HepG2 (cell line): ENCODE measurements at regions of chr14 and their contacts with region 1.

Region 1: GRCh38 chr14:61188978-61189808 is 91.9 kb downstream of the TMEM30B start:
- DNase-seq: peak; percentile 48
- ATAC-seq: peak; percentile 98
- H3K4me3 ChIP-seq: peak overlapping the region; percentile 49 to 72 (median 52); a peak in 5 of 6 replicates
- H3K27ac ChIP-seq: no peak overlapping the region
- H3K4me1 ChIP-seq: peaks cover 32% of the 10 kb centered on the region
- H3K27me3 ChIP-seq: peaks cover 0 to 4% of the 10 kb centered on the region in 2 experiments; a peak in 2 of 5 replicates
- CTCF ChIP-seq: peak; percentile 83
- EP300 ChIP-seq: no peak
- POLR2A ChIP-seq: no peak
- RAD21 ChIP-seq: peak; percentile 78

Region 2: DNA sequence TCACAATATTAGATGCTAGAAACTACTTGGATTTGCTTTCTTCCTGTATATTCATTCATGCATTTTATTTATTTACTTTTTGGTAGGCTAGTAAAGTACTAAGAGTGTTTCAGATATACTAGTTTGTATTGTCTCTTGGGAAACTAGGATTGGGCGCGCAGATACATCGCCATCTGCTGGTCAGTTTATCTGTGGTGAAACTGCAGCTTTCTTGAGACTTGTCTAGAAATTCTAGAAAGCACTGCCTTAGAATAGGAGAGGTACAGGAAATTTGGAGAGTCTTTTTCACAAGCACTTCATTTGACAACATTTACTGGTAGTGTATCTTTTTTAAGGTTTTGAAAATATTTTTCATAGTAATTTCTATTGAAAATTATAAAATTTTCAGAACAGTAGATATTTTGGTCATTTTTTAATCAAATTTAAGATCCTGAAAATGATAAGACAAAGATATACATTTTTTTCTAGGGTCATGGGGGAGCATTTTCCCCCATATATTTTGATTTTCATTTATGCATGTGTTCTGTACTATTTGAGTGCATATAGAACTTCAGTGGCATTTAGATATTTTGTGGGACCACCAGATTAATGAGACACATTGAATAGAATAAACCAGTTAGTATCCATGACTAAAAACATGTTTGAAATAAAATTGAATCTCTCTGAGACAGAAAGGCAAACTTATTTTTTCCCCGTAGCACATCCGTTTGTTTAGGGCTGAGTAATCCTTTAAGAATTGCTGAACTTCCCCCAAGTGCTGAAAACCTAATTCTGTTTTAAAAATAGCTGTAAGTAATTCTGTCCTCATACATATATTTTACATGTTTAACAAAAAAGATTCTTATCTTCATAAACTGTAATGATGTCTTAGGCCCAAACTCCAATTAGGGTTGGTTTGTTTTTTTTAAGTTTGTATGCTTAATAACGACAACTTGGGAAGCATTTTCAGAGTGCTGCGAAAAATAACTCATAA is 163.7 kb before region 1 on chr14:
- CTCF ChIA-PET with region 1: interaction called, 6 read pairs
- POLR2A ChIA-PET with region 1: no interaction called
- in situ Hi-C with region 1: loop called (anchors 25 kb)
- intact Hi-C with region 1: loop called (anchors 2 kb)
- DNase-seq: peak; percentile 57
- ATAC-seq: peak; percentile 59; the same call in 2 of the 3 replicates
- H3K4me3 ChIP-seq: no peak overlapping the region
- H3K27ac ChIP-seq: no peak overlapping the region
- H3K4me1 ChIP-seq: peaks cover 10% of the 10 kb centered on the region; the same call in 1 of the 2 replicates
- H3K27me3 ChIP-seq: no peaks in the 10 kb centered on the region
- CTCF ChIP-seq: peak; percentile 80
- EP300 ChIP-seq: no peak
- POLR2A ChIP-seq: no peak
- RAD21 ChIP-seq: peak; percentile 61

Region 3: DNA sequence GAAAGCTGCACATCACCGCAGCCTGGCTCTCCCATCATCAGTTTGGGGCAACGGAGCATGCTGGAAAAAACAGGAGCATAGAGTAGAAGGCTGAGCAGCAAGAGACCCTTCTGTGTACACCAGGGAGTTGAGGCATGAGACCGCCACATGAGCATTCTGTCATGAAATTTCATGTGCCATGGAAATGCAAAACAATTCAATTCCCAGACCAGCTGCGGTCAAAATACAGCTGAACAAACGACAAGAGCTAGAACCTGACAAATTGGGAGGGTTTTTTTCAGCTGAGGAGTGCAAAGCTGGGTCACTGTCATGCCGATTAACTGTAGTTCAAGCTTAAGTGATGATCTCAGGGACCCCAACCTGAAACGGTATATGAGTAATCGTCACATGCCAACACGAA is 54.8 kb after region 1 on chr14:
- CTCF ChIA-PET with region 1: no interaction called
- POLR2A ChIA-PET with region 1: no interaction called
- in situ Hi-C with region 1: no loop called
- intact Hi-C with region 1: no loop called
- DNase-seq: no peak
- ATAC-seq: no peak
- H3K4me3 ChIP-seq: no peak overlapping the region
- H3K27ac ChIP-seq: no peak overlapping the region
- H3K4me1 ChIP-seq: no peaks in the 10 kb centered on the region
- H3K27me3 ChIP-seq: peaks cover 0 to 9% of the 10 kb centered on the region in 2 experiments; a peak in 1 of 5 replicates
- CTCF ChIP-seq: no peak
- EP300 ChIP-seq: no peak
- POLR2A ChIP-seq: no peak
- RAD21 ChIP-seq: no peak

Region 4: GRCh38 chr14:61280526-61281185 is 91.5 kb after region 1 on chr14:
- CTCF ChIA-PET with region 1: no interaction called
- POLR2A ChIA-PET with region 1: no interaction called
- in situ Hi-C with region 1: no loop called
- intact Hi-C with region 1: no loop called
- DNase-seq: no peak
- ATAC-seq: no peak
- H3K4me3 ChIP-seq: no peak overlapping the region
- H3K27ac ChIP-seq: no peak overlapping the region
- H3K4me1 ChIP-seq: peaks cover 31% of the 10 kb centered on the region
- H3K27me3 ChIP-seq: no peaks in the 10 kb centered on the region; a peak in 1 of 5 replicates
- CTCF ChIP-seq: no peak
- EP300 ChIP-seq: no peak
- POLR2A ChIP-seq: no peak
- RAD21 ChIP-seq: no peak

Region 5: GRCh38 chr14:61290701-61291100 is 101.5 kb after region 1 on chr14:
- CTCF ChIA-PET with region 1: no interaction called
- POLR2A ChIA-PET with region 1: no interaction called
- in situ Hi-C with region 1: no loop called
- intact Hi-C with region 1: no loop called
- DNase-seq: no peak
- ATAC-seq: no peak
- H3K4me3 ChIP-seq: no peak overlapping the region
- H3K27ac ChIP-seq: no peak overlapping the region
- H3K4me1 ChIP-seq: peaks cover 19% of the 10 kb centered on the region
- H3K27me3 ChIP-seq: no peaks in the 10 kb centered on the region
- CTCF ChIP-seq: no peak
- EP300 ChIP-seq: no peak
- POLR2A ChIP-seq: no peak
- RAD21 ChIP-seq: no peak